A549 (cell line): ENCODE measurements at regions of chr17 and their contacts with region 1.

Region 1: DNA sequence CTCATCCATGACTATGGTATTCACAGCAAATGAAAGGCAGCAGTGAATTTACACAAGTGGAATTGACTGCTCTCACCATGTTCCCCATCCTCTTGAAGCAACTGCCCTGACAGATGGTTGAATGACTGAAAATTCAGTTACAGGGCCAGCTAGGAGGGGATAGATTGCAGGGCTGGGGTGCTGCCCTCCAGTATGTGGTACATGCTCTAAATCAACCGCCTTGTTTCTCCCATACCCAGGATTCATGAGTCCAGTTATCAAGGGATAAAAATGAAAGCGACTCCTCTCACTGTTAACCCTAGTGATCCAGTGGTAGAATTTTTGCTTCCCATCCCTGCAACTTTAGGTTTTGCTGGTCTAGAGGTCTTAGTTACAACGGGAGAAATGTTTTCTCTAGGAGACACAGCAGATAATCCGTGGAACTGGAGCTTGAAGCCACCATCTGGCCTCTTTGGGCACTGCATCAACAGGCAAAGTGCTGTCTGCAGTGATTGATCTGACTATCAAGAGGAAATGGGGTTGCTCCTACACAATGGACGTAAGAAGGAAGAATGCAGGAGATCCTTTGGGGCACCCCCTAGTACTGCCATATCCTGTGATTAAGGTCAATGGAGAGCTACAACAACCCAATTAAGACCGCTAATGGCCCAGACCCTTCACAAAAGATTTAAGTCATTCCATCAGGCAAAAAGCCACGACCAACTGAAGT is 32.0 kb downstream of the SCPEP1 start:
- DNase-seq: peak; percentile 72 to 79
- ATAC-seq: peak; percentile 96 to 97
- H3K4me3 ChIP-seq: no peak overlapping the region
- H3K27ac ChIP-seq: no peak overlapping the region
- H3K4me1 ChIP-seq: peaks cover 11% of the 10 kb centered on the region; the same call in 2 of the 3 replicates
- CTCF ChIP-seq: peak; percentile 59
- EP300 ChIP-seq: no peak
- POLR2A ChIP-seq: no peak
- RAD21 ChIP-seq: peak; percentile 48 to 65; a peak in 4 of 5 replicates

Region 2: GRCh38 chr17:56851008-56851407 is 158.9 kb before region 1 on chr17:
- CTCF ChIA-PET with region 1: no interaction called
- POLR2A ChIA-PET with region 1: no interaction called
- DNase-seq: no peak
- ATAC-seq: 0 out of 6 replicates have a peak, but pooled peaks of 1 of the 2 experiments have one; percentile 39
- H3K4me3 ChIP-seq: no peak overlapping the region
- H3K27ac ChIP-seq: no peak overlapping the region
- H3K4me1 ChIP-seq: no peaks in the 10 kb centered on the region
- CTCF ChIP-seq: no peak
- EP300 ChIP-seq: no peak
- POLR2A ChIP-seq: no peak
- RAD21 ChIP-seq: no peak

Region 3: GRCh38 chr17:56994009-56994792 is 15.7 kb before region 1 on chr17:
- CTCF ChIA-PET with region 1: interaction called, 17 read pairs
- POLR2A ChIA-PET with region 1: no interaction called
- DNase-seq: no peak
- ATAC-seq: no peak
- H3K4me3 ChIP-seq: no peak overlapping the region
- H3K27ac ChIP-seq: no peak overlapping the region
- H3K4me1 ChIP-seq: no peaks in the 10 kb centered on the region
- CTCF ChIP-seq: no peak
- EP300 ChIP-seq: no peak
- POLR2A ChIP-seq: no peak
- RAD21 ChIP-seq: no peak

Region 4: GRCh38 chr17:57020208-57020607 is 10.3 kb after region 1 on chr17:
- CTCF ChIA-PET with region 1: interaction called, 10 read pairs
- POLR2A ChIA-PET with region 1: interaction called, 3 read pairs
- DNase-seq: no peak
- ATAC-seq: no peak
- H3K4me3 ChIP-seq: no peak overlapping the region
- H3K27ac ChIP-seq: peak overlapping the region in 1 of 2 experiments; percentile 14; a peak in 1 of 6 replicates
- H3K4me1 ChIP-seq: peaks cover 15% of the 10 kb centered on the region
- CTCF ChIP-seq: no peak
- EP300 ChIP-seq: no peak
- POLR2A ChIP-seq: no peak
- RAD21 ChIP-seq: no peak